Endothelial cell of umbilical vein (primary cell): ENCODE measurements at regions of chr9 and their contacts with region 1.

Region 1: DNA sequence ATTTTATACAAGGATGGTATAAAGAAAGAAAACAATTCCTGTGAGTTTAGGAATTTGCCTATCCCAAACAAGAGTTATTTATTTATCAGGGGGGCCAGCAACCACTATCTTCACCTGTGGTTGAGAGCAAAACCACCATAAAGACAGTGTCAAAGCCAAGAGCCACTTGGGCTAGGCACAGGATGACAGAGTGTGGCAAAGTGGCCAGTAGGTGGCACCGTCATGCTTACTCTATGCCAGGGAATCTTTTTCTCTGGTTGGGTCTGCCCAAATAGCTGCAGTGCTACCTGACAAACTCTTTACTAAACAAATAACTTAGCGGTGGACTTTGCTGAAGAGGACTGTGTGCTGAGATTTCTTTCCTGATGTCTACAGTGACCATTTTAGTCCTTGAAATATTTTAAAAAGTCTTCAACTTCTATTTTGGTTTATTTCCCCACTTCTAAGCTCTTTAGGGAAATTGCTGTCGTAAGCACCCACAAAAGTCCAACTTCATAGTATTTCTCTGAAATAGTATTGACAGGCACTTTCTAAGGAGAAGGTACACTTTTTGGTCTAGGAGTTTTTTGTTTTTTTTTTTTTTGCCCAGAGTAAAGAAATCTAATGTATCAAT is 285.0 kb downstream of the RFX3 start:
- DNase-seq: peak; percentile 67
- H3K4me3 ChIP-seq: no peak overlapping the region
- H3K27ac ChIP-seq: no peak overlapping the region
- H3K4me1 ChIP-seq: no peaks in the 10 kb centered on the region
- H3K27me3 ChIP-seq: no peaks in the 10 kb centered on the region
- CTCF ChIP-seq: peak; percentile 77 to 88
- POLR2A ChIP-seq: no peak

Region 2: GRCh38 chr9:3161665-3162306 is 79.0 kb before region 1 on chr9:
- CTCF ChIA-PET with region 1: no interaction called
- POLR2A ChIA-PET with region 1: no interaction called
- dilution Hi-C with region 1: no loop called
- intact Hi-C with region 1: no loop called
- DNase-seq: no peak
- H3K4me3 ChIP-seq: no peak overlapping the region
- H3K27ac ChIP-seq: no peak overlapping the region
- H3K4me1 ChIP-seq: no peaks in the 10 kb centered on the region
- H3K27me3 ChIP-seq: no peaks in the 10 kb centered on the region
- CTCF ChIP-seq: no peak
- POLR2A ChIP-seq: no peak

Region 3: DNA sequence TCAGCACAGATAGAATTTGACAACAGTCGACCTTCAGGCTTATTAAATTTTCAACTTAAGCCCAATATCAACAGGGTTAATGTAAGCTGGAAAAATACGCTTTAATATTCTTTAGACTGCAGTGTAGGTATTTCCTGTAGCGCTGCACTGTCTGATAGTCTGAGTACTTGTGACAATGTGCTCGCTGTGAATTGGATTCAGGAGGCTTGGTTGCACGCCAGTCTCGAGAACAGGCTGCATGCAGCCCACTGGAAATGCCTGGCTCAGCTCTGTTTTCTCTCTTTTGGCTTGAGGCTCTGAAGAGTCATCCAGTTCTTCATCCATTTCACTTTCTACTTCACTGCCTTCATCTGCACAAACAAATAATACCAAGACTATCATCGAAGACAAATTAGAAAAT is 15.8 kb before region 1 on chr9:
- CTCF ChIA-PET with region 1: interaction called, 21 read pairs
- POLR2A ChIA-PET with region 1: no interaction called
- dilution Hi-C with region 1: no loop called
- intact Hi-C with region 1: no loop called
- DNase-seq: peak; percentile 37
- H3K4me3 ChIP-seq: no peak overlapping the region
- H3K27ac ChIP-seq: no peak overlapping the region
- H3K4me1 ChIP-seq: peaks cover 7% of the 10 kb centered on the region
- H3K27me3 ChIP-seq: no peaks in the 10 kb centered on the region
- CTCF ChIP-seq: no peak
- POLR2A ChIP-seq: no peak

Region 4: DNA sequence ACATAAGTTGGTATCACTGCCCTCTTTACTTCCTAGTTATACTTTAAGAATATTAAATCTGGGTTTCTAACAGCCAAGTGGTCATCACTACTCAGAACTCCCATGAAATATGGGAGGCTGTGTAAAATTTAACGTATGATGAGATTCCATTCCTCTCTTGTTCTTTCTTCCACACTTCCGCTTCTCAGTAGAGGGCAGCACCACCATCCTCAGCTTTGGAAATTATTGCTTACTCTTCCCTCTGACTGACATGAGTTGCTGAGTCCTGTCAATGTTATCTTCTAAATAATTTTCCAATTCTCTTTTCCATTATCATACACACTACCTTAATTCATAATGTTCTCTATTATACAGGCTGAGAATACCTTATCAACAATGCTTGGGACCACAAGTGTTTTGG is 91.1 kb after region 1 on chr9:
- CTCF ChIA-PET with region 1: interaction called, 15 read pairs
- POLR2A ChIA-PET with region 1: no interaction called
- dilution Hi-C with region 1: no loop called
- intact Hi-C with region 1: no loop called
- DNase-seq: no peak
- H3K4me3 ChIP-seq: no peak overlapping the region
- H3K27ac ChIP-seq: no peak overlapping the region
- H3K4me1 ChIP-seq: peaks cover 33% of the 10 kb centered on the region
- H3K27me3 ChIP-seq: no peaks in the 10 kb centered on the region
- CTCF ChIP-seq: no peak
- POLR2A ChIP-seq: no peak

Region 5: GRCh38 chr9:3433066-3433465 is 192.3 kb after region 1 on chr9:
- CTCF ChIA-PET with region 1: interaction called, 566 read pairs
- POLR2A ChIA-PET with region 1: no interaction called
- dilution Hi-C with region 1: no loop called
- intact Hi-C with region 1: no loop called
- DNase-seq: no peak
- H3K4me3 ChIP-seq: no peak overlapping the region
- H3K27ac ChIP-seq: no peak overlapping the region
- H3K4me1 ChIP-seq: no peaks in the 10 kb centered on the region
- H3K27me3 ChIP-seq: no peaks in the 10 kb centered on the region
- CTCF ChIP-seq: no peak
- POLR2A ChIP-seq: no peak

Region 6: DNA sequence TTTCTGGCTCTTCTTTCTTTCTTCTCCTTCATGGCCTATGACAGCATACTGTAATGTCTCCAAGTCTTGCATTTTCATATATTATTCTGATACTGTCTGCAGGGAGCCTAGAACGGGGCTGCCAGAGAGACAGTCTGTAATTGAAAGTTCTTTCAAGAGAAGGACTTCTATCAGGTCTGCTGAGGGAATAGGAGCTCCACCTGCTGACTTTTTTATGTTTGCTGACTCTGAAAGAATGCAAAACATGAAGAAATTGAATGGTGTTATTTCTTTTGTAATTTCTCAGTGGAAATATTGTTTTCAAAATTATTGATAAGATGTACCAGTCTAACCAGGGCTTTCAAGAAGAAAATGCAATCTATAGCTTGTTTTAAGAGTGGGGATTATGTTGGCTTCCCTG is 406.9 kb after region 1 on chr9:
- CTCF ChIA-PET with region 1: interaction called, 16 read pairs
- POLR2A ChIA-PET with region 1: no interaction called
- dilution Hi-C with region 1: no loop called
- intact Hi-C with region 1: no loop called
- DNase-seq: peak; percentile 18
- H3K4me3 ChIP-seq: no peak overlapping the region
- H3K27ac ChIP-seq: no peak overlapping the region
- H3K4me1 ChIP-seq: no peaks in the 10 kb centered on the region
- H3K27me3 ChIP-seq: no peaks in the 10 kb centered on the region
- CTCF ChIP-seq: no peak
- POLR2A ChIP-seq: no peak